Naive thymus-derived CD4-positive, alpha-beta T cell (primary cell): ENCODE measurements at regions of chr18 and their contacts with region 1.

Region 1: DNA sequence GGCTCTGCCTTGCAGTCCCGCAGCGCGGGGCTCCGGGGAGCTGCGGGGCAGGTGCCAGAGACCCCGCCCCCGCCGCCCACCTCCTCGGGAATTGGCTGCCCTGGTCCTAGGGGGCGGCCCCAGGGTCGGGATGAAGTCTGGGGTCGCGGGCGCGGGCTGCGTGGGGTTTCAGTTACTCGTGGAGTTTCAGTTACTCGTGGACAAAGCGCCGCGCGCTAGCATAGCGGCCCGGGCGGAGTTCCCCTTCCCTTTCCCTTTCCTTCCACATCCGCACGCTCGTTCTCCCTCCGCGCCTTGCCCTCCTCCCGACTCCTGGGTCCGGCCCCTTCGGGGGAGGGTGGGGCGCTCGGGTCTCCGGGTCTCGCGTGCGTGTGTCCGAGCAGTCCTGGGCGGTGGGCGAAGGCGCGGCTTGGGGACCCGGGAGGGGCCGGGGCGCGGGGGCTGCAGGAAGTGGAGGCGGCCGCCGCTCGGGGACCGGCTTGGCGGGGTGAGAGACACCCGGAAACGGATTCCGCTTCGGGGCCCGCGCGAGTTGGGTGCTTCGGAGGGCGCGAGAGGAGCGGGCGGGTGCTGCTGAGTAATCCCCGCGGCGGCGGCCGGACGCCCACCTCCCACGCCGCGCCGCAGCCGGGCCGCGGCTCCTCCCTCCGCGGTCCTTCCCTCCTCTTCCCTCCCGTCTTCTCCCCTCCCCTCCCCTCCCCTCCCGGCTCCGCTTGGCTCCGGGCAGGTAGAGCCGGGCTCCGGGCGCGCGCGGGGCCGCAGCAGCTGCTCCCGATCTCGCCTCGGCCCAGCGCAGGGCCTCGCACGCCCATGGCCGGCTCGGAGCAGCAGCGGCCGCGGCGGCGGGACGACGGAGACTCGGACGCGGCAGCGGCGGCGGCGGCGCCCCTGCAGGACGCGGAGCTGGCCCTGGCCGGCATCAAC is at the start of gene TTC39C:
- DNase-seq: peak; percentile 60 to 90 (median 74)
- ATAC-seq: peak; percentile 71
- H3K4me3 ChIP-seq: peak within 1 kb of the TSS; percentile 86
- H3K4me3 Mint-ChIP-seq: peak within 1 kb of the TSS; percentile 93 to 100 (median 98)
- H3K27ac ChIP-seq: peak within 1 kb of the TSS; percentile 84
- H3K27ac Mint-ChIP-seq: peak within 1 kb of the TSS; percentile 92 to 98 (median 95)
- H3K4me1 ChIP-seq: peaks cover 72 to 80% of the 10 kb centered on the region in 2 donors
- H3K4me1 Mint-ChIP-seq: peaks cover 58 to 84% (median 72%) of the 10 kb centered on the region in 7 donors
- H3K27me3 ChIP-seq: no peaks in the 10 kb centered on the region
- H3K27me3 Mint-ChIP-seq: no peaks in the 10 kb centered on the region
- total RNA-seq, gene TTC39C: 84.1 to 98.8 (median 91.4) TPM

Region 2: DNA sequence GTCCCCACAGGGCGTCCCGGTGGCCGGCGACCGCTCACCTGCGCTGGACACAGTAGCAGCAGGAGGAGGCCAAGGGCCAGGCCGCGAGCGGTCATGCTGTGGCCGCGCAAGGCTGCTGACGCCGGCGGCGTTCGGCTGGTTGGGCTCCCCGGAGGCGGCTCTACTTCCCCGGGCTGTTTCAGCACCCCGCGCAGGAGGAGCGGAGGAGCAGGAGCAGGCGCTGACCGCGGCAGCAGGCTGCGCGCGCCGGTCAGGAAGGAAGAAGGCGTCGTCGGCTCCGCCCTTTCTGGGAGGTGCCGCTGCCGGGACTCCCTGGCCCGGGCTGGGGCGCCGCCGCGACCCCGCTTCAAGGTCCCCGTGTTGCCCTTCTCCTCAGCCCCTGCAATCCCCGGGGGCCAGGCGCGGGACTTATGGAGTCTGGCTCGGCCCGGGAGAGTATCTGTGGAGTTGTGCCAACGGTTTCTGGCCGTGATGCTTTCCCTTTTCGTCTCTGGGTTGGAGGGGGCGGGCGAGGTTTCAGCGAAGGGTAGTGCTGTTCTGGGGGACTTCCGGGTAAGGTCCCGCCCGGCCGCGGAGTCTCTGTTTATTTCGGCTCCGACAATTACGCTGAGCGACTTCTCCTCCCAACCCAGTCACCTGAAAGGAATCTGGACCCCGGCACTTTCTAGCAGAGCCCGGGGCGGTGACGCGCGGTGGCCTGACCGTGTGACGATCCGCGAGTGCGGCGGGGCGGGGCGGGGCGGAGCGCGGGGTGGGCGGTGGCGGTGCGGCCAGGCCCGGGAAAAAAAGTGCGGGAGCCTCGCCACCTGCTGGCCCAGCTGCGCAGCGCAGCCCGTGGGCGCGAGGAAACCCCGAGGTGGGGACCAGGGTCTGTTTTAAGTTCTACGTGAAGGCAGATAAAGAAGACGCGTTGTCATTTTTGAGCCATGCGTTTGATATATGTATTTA is 427.8 kb before region 1 on chr18 and contains the start of gene NPC1:
- CTCF ChIA-PET with region 1: no interaction called
- POLR2A ChIA-PET with region 1: no interaction called
- intact Hi-C with region 1: loop called (anchors 1 to 2 kb)
- DNase-seq: peak; percentile 88 to 95 (median 93)
- ATAC-seq: peak; percentile 93
- H3K4me3 ChIP-seq: peak within 1 kb of the TSS; percentile 76
- H3K4me3 Mint-ChIP-seq: peak within 1 kb of the TSS; percentile 79 to 96 (median 92)
- H3K27ac ChIP-seq: peak within 1 kb of the TSS; percentile 100
- H3K27ac Mint-ChIP-seq: peak within 1 kb of the TSS; percentile 84 to 97 (median 94)
- H3K4me1 ChIP-seq: peaks cover 9 to 25% of the 10 kb centered on the region in 2 donors
- H3K4me1 Mint-ChIP-seq: peaks cover 25 to 45% (median 37%) of the 10 kb centered on the region in 7 donors
- H3K27me3 ChIP-seq: no peaks in the 10 kb centered on the region
- H3K27me3 Mint-ChIP-seq: peaks cover 0 to 13% (median 0%) of the 10 kb centered on the region in 5 donors
- total RNA-seq, gene NPC1: 29.2 to 49.3 (median 31.4) TPM

Region 3: GRCh38 chr18:23812546-23813440 is 201.5 kb before region 1 on chr18:
- CTCF ChIA-PET with region 1: no interaction called
- POLR2A ChIA-PET with region 1: interaction called, 4 read pairs
- intact Hi-C with region 1: loop called in 1 of 2 experiments (anchors 1 kb)
- DNase-seq: peak in 5 of 9 donors; percentile 21 to 46 (median 41)
- ATAC-seq: peak; percentile 61
- H3K4me3 ChIP-seq: no peak overlapping the region
- H3K4me3 Mint-ChIP-seq: no peak overlapping the region
- H3K27ac ChIP-seq: no peak overlapping the region
- H3K27ac Mint-ChIP-seq: peak overlapping the region in 1 of 9 donors; percentile 45
- H3K4me1 ChIP-seq: peaks cover 6 to 14% of the 10 kb centered on the region in 2 donors
- H3K4me1 Mint-ChIP-seq: peaks cover 4 to 29% (median 27%) of the 10 kb centered on the region in 7 donors
- H3K27me3 ChIP-seq: no peaks in the 10 kb centered on the region
- H3K27me3 Mint-ChIP-seq: peaks cover 0 to 18% (median 0%) of the 10 kb centered on the region in 5 donors

Region 4: GRCh38 chr18:23871410-23871809 is 142.9 kb before region 1 on chr18:
- CTCF ChIA-PET with region 1: no interaction called
- POLR2A ChIA-PET with region 1: interaction called, 3 read pairs
- intact Hi-C with region 1: loop called in 1 of 2 experiments (anchors 2 kb)
- DNase-seq: peak; percentile 30 to 86 (median 80)
- ATAC-seq: peak; percentile 99
- H3K4me3 ChIP-seq: no peak overlapping the region
- H3K4me3 Mint-ChIP-seq: peak overlapping the region; percentile 56 to 82 (median 74)
- H3K27ac ChIP-seq: peak overlapping the region; percentile 25
- H3K27ac Mint-ChIP-seq: peak overlapping the region; percentile 26 to 99 (median 95)
- H3K4me1 ChIP-seq: peaks cover 38 to 52% of the 10 kb centered on the region in 2 donors
- H3K4me1 Mint-ChIP-seq: peaks cover 26 to 59% (median 47%) of the 10 kb centered on the region in 7 donors
- H3K27me3 ChIP-seq: no peaks in the 10 kb centered on the region
- H3K27me3 Mint-ChIP-seq: peaks cover 0 to 32% (median 0%) of the 10 kb centered on the region in 5 donors

Region 5: GRCh38 chr18:23967321-23968089 is 46.8 kb before region 1 on chr18:
- CTCF ChIA-PET with region 1: interaction called, 4 read pairs
- POLR2A ChIA-PET with region 1: interaction called, 33 read pairs
- intact Hi-C with region 1: loop called (anchors 1 to 2 kb)
- DNase-seq: no peak
- ATAC-seq: peak; percentile 58
- H3K4me3 ChIP-seq: no peak overlapping the region
- H3K4me3 Mint-ChIP-seq: peak overlapping the region in 5 of 10 donors; percentile 4 to 80 (median 29)
- H3K27ac ChIP-seq: no peak overlapping the region
- H3K27ac Mint-ChIP-seq: peak overlapping the region in 7 of 9 donors; percentile 30 to 91 (median 86)
- H3K4me1 ChIP-seq: peaks cover 43 to 70% of the 10 kb centered on the region in 2 donors
- H3K4me1 Mint-ChIP-seq: peaks cover 43 to 82% (median 79%) of the 10 kb centered on the region in 7 donors
- H3K27me3 ChIP-seq: no peaks in the 10 kb centered on the region
- H3K27me3 Mint-ChIP-seq: no peaks in the 10 kb centered on the region

Region 6: GRCh38 chr18:24075731-24076130 is 61.4 kb after region 1 on chr18:
- CTCF ChIA-PET with region 1: interaction called, 3 read pairs
- POLR2A ChIA-PET with region 1: interaction called, 3 read pairs
- intact Hi-C with region 1: loop called (anchors 1 to 5 kb)
- DNase-seq: no peak
- ATAC-seq: no peak
- H3K4me3 ChIP-seq: no peak overlapping the region
- H3K4me3 Mint-ChIP-seq: peak overlapping the region in 3 of 10 donors; percentile 20 to 38 (median 29)
- H3K27ac ChIP-seq: no peak overlapping the region
- H3K27ac Mint-ChIP-seq: peak overlapping the region in 8 of 9 donors; percentile 52 to 86 (median 67)
- H3K4me1 ChIP-seq: peaks cover 7 to 16% of the 10 kb centered on the region in 2 donors
- H3K4me1 Mint-ChIP-seq: peaks cover 24 to 63% (median 51%) of the 10 kb centered on the region in 7 donors
- H3K27me3 ChIP-seq: no peaks in the 10 kb centered on the region
- H3K27me3 Mint-ChIP-seq: no peaks in the 10 kb centered on the region